GM13976 (cell line): ENCODE measurements at regions of chr9 and their contacts with region 1.

Region 1: GRCh38 chr9:113446323-113446740 is 17.2 kb upstream of the RGS3 start:
- DNase-seq: peak; percentile 79
- CTCF ChIP-seq: peak; percentile 28

Region 2: DNA sequence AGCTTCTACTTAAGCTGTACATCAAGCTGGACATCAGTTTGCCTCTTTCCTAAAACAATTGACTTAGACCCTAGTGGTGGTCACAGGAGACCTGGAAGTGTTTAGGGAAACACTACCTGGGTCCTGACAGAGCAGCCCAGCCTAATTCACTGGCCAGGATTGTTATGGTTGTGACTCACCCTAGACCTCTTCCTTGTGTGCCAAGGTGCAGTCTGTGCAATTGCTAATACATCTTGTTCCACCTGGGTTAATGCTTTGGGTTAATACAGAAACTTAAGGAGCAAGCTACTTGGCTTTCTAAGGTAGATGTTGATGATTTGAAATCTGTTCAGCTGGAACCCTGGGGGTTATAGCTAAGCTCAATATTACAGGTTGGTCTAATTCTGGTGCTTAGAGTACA is 506.9 kb before region 1 on chr9:
- in situ Hi-C with region 1: no loop called
- DNase-seq: no peak
- CTCF ChIP-seq: no peak

Region 3: DNA sequence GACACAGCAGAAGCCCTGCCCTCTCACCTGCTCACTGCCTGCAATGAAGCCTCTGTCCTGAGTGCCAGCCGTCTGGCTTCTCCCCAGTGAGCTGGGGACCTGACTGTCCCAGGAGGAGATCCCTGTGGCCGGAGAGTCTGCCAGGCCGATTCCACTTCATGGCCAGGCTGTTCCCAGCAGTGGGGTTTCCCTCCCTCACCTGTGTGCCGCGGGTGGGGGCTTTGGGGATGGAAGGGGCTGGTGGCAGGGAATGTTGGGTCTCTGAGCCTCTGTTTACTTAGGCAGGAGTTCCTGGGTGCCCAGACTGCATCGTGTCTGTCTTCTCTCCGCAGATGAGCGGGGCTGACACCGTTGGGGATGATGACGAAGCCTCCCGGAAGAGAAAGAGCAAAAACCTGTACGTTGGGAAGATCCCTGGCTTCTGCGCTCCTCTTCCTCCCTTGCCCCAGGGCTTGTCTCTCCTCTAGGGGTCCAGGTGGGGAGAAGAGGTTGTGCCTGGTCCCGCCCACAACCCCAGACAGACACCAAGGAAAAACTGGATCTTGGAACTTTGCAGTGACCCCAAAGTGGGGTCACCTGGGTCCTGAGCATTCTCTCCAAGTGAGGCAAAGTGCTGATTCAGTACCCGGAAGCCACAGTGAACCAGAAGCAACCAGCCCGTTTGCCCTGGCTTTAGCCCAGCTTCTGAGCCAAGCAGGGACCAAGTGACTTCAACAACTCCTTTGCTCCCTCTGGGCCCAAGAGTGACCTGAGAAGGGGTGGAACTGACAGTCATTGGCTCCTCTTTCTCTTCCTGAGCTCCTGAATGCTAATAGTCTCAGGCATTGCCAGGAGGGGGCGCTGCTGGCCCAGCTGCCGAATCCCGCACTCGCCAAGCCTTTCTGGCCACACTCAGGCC is 144.9 kb after region 1 on chr9:
- in situ Hi-C with region 1: loop called (anchors 5 kb)
- DNase-seq: peak; percentile 81
- CTCF ChIP-seq: peak; percentile 81